ENCODE measurements at regions of chr3 and their contacts with region 1.

Region 1: GRCh38 chr3:184145111-184145524 is 10.0 kb downstream of the EIF2B5 start:
- DNase-seq: peak in 1 of 5 donors; percentile 48
- ATAC-seq: peak; percentile 61 to 76 (median 64)
- H3K4me3 ChIP-seq: no peak overlapping the region
- H3K27ac ChIP-seq: peak overlapping the region in 1 of 12 donors; percentile 12
- H3K4me1 ChIP-seq: peaks cover 0 to 15% (median 3%) of the 10 kb centered on the region in 12 donors
- H3K27me3 ChIP-seq: no peaks in the 10 kb centered on the region
- CTCF ChIP-seq: peak in 11 of 12 donors; percentile 11 to 56 (median 40)
- POLR2A ChIP-seq: no peak

Region 2: DNA sequence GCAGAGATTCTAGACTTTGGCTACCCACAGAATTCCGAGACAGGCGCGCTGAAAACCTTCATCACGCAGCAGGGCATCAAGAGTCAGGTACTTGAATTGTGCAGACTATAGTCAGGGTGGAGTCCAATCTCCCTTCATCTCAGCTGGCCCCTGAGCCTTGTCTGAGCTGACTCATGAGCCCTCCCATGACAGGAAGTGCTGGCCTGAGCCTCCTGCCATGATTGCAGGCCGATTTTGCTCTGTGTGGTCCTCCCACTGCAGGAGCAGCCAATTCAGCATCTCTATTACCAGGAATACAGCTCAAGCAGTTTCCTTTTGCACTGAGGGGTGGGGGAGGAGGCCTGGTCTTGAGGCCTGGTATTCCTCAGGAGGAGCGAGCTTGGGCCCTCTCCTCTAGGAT is 35.0 kb after region 1 on chr3:
- intact Hi-C with region 1: loop called in 2 of 10 experiments (anchors 5 kb)
- DNase-seq: no peak
- ATAC-seq: no peak
- H3K4me3 ChIP-seq: no peak overlapping the region
- H3K27ac ChIP-seq: peak overlapping the region in 1 of 12 donors; percentile 32
- H3K4me1 ChIP-seq: peaks cover 0 to 53% (median 29%) of the 10 kb centered on the region in 12 donors
- H3K27me3 ChIP-seq: no peaks in the 10 kb centered on the region
- CTCF ChIP-seq: no peak
- POLR2A ChIP-seq: no peak

Region 3: GRCh38 chr3:184235381-184236032 is 90.4 kb after region 1 on chr3:
- intact Hi-C with region 1: loop called in 4 of 10 experiments (anchors 5 to 10 kb)
- DNase-seq: no peak
- ATAC-seq: no peak
- H3K4me3 ChIP-seq: no peak overlapping the region
- H3K27ac ChIP-seq: no peak overlapping the region
- H3K4me1 ChIP-seq: peaks cover 0 to 6% (median 0%) of the 10 kb centered on the region in 12 donors
- H3K27me3 ChIP-seq: peaks cover 9 to 39% (median 18%) of the 10 kb centered on the region in 9 donors
- CTCF ChIP-seq: no peak
- POLR2A ChIP-seq: no peak

Region 4: DNA sequence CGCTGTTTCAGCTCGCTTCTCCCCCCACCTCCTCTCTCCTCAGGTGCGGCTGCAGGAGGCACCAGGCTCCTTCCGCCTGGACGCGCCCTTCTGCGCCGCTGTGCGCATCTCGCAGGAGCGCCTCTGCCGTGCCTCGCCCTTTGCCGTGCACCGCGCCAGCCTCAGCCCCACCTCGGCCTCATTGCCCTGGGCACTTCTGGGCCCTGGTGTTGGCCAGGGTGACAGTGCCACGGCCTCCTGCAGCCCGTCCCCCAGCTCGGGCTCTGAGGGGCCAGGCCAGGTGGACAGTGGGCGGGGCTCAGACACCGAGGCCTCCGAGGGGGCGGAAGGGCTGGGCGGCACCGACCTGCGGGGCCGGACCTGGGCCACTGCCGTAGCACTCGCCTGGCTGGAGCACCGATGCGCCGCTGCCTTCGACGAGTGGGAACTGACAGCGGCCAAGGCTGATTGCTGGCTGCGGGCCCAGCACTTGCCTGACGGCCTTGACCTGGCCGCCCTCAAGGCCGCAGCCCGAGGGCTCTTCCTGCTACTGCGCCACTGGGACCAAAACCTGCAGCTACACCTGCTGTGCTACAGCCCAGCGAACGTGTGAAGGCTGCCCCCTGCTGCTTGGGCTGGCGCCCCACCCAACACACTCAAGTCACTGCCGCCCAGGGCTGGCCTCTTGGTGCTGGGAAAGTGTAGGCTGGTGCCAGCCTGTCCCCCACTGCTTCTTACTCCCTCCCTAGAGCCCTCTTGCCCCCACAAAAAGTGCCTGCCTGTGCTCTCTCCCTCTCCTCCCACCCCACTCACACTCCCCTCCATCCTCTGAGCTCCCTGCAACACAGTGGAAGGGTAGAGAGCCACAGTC is 96.6 kb after region 1 on chr3:
- intact Hi-C with region 1: loop called in 6 of 10 experiments (anchors 5 to 10 kb)
- DNase-seq: peak in 2 of 5 donors; percentile 51 to 65
- ATAC-seq: peak; percentile 61 to 77 (median 70)
- H3K4me3 ChIP-seq: no peak overlapping the region
- H3K27ac ChIP-seq: no peak overlapping the region
- H3K4me1 ChIP-seq: peaks cover 0 to 8% (median 5%) of the 10 kb centered on the region in 12 donors
- H3K27me3 ChIP-seq: peaks cover 0 to 3% (median 0%) of the 10 kb centered on the region in 9 donors
- CTCF ChIP-seq: peak in 11 of 12 donors; percentile 29 to 61 (median 46)
- POLR2A ChIP-seq: no peak

Region 5: GRCh38 chr3:184443380-184443779 is 298.3 kb after region 1 on chr3:
- intact Hi-C with region 1: no loop called
- DNase-seq: no peak
- ATAC-seq: no peak
- H3K4me3 ChIP-seq: no peak overlapping the region
- H3K27ac ChIP-seq: no peak overlapping the region
- H3K4me1 ChIP-seq: no peaks in the 10 kb centered on the region
- H3K27me3 ChIP-seq: peaks cover 0 to 3% (median 0%) of the 10 kb centered on the region in 9 donors
- CTCF ChIP-seq: no peak
- POLR2A ChIP-seq: no peak

Region 6: GRCh38 chr3:184513276-184514170 is 368.4 kb after region 1 on chr3:
- intact Hi-C with region 1: loop called in 1 of 10 experiments (anchors 10 kb)
- DNase-seq: peak; percentile 85 to 90 (median 87)
- ATAC-seq: peak; percentile 96 to 99 (median 98)
- H3K4me3 ChIP-seq: peak overlapping the region in 11 of 12 donors; percentile 15 to 60 (median 50)
- H3K27ac ChIP-seq: peak overlapping the region in 6 of 12 donors; percentile 34 to 45 (median 37)
- H3K4me1 ChIP-seq: peaks cover 0 to 21% (median 9%) of the 10 kb centered on the region in 12 donors
- H3K27me3 ChIP-seq: peaks cover 0 to 58% (median 19%) of the 10 kb centered on the region in 9 donors
- CTCF ChIP-seq: peak; percentile 78 to 90 (median 86)
- POLR2A ChIP-seq: no peak